Heart right ventricle (tissue), 16 donors: ENCODE measurements at regions of chr12 and their contacts with region 1.

Region 1: GRCh38 chr12:74111688-74112360 is 425.8 kb upstream of the ATXN7L3B start:
- DNase-seq: no peak
- ATAC-seq: no peak
- H3K4me3 ChIP-seq: no peak overlapping the region
- H3K27ac ChIP-seq: no peak overlapping the region
- H3K4me1 ChIP-seq: no peaks in the 10 kb centered on the region
- H3K27me3 ChIP-seq: no peaks in the 10 kb centered on the region
- CTCF ChIP-seq: peak in 5 of 9 donors; percentile 11 to 55 (median 31)

Region 2: GRCh38 chr12:74235342-74235741 is 123.5 kb after region 1 on chr12:
- intact Hi-C with region 1: no loop called
- DNase-seq: no peak
- ATAC-seq: no peak
- H3K4me3 ChIP-seq: no peak overlapping the region
- H3K27ac ChIP-seq: no peak overlapping the region
- H3K4me1 ChIP-seq: no peaks in the 10 kb centered on the region
- H3K27me3 ChIP-seq: no peaks in the 10 kb centered on the region
- CTCF ChIP-seq: no peak

Region 3: GRCh38 chr12:74415633-74416032 is 303.8 kb after region 1 on chr12:
- intact Hi-C with region 1: loop called in 1 of 10 experiments (anchors 10 kb)
- DNase-seq: no peak
- ATAC-seq: no peak
- H3K4me3 ChIP-seq: no peak overlapping the region
- H3K27ac ChIP-seq: no peak overlapping the region
- H3K4me1 ChIP-seq: no peaks in the 10 kb centered on the region
- H3K27me3 ChIP-seq: no peaks in the 10 kb centered on the region
- CTCF ChIP-seq: peak in 7 of 9 donors; percentile 27 to 53 (median 40)

Region 4: DNA sequence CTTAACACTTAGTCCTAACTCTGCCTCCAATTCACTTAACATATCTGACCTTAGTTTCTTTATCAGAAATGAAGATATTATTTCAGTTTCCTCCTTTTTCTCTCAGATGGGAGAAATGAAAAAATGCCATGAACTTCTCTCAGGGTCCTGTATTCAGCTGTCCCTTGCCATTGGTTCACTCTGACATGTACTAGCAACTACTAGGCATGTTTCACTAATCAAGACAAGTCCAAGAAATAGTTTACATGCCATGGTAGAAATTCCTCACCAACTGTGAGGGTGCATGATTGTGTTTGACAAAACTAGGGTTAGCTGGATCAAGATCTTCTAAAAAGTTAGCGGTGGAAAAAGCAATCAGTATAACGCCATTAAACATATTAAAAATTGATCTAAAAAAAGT is 418.9 kb after region 1 on chr12:
- intact Hi-C with region 1: no loop called
- DNase-seq: no peak
- ATAC-seq: no peak
- H3K4me3 ChIP-seq: no peak overlapping the region
- H3K27ac ChIP-seq: no peak overlapping the region
- H3K4me1 ChIP-seq: no peaks in the 10 kb centered on the region
- H3K27me3 ChIP-seq: peaks cover 0 to 5% (median 0%) of the 10 kb centered on the region in 7 donors
- CTCF ChIP-seq: no peak